ENCODE measurements at regions of chr17 and their contacts with region 1.

Region 1: DNA sequence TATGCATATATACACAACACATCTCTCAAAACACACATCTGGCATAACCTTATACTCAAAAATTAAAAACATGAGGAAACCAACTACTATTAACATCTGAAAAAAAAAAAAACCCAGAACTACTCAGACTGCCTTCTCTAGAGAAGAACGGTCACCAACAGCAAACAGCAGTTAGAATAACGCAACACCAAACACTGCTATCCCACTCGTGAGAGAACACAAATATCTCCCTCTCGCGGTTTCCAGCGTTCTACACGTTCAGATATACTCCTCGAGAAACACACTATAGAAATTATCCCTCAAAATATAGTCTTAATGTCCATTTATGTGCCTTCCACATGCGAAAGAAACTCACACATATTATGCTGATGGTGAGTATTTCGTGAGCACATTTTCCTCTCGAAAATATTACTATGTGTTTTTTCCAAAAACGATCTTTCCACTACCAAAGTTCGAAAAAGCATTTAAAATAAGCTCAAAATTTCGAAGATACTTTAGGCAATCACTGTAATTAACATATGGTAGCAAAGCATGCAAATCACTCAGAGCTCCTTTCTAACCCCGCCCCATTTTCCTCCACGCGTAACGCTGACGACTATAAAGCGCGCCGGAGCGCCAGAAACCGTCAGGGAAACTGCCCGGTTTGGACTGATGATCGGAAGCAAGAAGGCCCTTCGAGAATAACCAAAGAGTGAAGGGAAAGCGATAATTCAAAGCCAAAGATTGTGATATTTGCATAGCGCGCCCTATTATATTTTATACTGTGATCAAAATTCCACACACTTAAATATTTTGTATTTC is 60.1 kb downstream of the TEX14 start:
- DNase-seq: peak; percentile 100
- ATAC-seq: peak; percentile 90
- H3K4me3 ChIP-seq: peak overlapping the region; percentile 39 to 48
- H3K27ac ChIP-seq: peak overlapping the region; percentile 80
- H3K4me1 ChIP-seq: peaks cover 11 to 18% of the 10 kb centered on the region in 2 experiments
- H3K27me3 ChIP-seq: no peaks in the 10 kb centered on the region
- CTCF ChIP-seq: peak in 2 of 3 experiments; percentile 7 to 16; a peak in 1 of 6 replicates
- POLR2A ChIP-seq: peak; percentile 100
- RAD21 ChIP-seq: peak; percentile 50

Region 2: GRCh38 chr17:58317421-58318064 is 314.2 kb before region 1 on chr17:
- CTCF ChIA-PET with region 1: no interaction called
- POLR2A ChIA-PET with region 1: interaction called, 18 read pairs
- RAD21 ChIA-PET with region 1: no interaction called
- intact Hi-C with region 1: no loop called
- DNase-seq: peak; percentile 72
- ATAC-seq: peak; percentile 95
- H3K4me3 ChIP-seq: no peak overlapping the region
- H3K27ac ChIP-seq: peak overlapping the region; percentile 30; the same call in 1 of the 2 replicates
- H3K4me1 ChIP-seq: peaks cover 8 to 17% of the 10 kb centered on the region in 2 experiments; a peak in 3 of 4 replicates
- H3K27me3 ChIP-seq: no peaks in the 10 kb centered on the region
- CTCF ChIP-seq: peak; percentile 97 to 99 (median 99)
- POLR2A ChIP-seq: no peak
- RAD21 ChIP-seq: peak; percentile 100

Region 3: DNA sequence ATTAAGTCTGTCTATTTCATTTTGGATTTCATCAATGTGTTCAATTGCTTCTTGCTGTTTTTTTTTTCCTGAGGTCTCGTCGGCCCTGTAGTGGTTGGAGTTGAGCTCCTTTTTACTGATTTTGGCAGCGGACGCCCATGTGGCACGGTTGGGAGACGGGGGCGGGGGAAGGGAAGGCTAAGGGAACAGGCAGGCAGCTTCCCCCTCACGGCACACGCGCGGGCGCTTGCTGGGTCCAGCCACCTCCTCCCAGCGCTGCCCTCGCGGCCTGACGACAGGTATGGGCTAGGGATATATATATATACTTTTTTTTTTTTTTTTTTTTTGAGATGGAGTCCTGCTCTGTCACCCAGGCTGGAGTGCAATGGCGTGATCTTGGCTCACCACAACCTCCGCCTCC is 154.9 kb before region 1 on chr17:
- CTCF ChIA-PET with region 1: no interaction called
- POLR2A ChIA-PET with region 1: no interaction called
- RAD21 ChIA-PET with region 1: no interaction called
- intact Hi-C with region 1: no loop called
- DNase-seq: no peak
- ATAC-seq: no peak
- H3K4me3 ChIP-seq: no peak overlapping the region
- H3K27ac ChIP-seq: no peak overlapping the region
- H3K4me1 ChIP-seq: no peaks in the 10 kb centered on the region
- H3K27me3 ChIP-seq: 0 out of 2 replicates have a peak, but pooled peaks cover 3% of the 10 kb centered on the region
- CTCF ChIP-seq: no peak
- POLR2A ChIP-seq: no peak
- RAD21 ChIP-seq: no peak

Region 4: DNA sequence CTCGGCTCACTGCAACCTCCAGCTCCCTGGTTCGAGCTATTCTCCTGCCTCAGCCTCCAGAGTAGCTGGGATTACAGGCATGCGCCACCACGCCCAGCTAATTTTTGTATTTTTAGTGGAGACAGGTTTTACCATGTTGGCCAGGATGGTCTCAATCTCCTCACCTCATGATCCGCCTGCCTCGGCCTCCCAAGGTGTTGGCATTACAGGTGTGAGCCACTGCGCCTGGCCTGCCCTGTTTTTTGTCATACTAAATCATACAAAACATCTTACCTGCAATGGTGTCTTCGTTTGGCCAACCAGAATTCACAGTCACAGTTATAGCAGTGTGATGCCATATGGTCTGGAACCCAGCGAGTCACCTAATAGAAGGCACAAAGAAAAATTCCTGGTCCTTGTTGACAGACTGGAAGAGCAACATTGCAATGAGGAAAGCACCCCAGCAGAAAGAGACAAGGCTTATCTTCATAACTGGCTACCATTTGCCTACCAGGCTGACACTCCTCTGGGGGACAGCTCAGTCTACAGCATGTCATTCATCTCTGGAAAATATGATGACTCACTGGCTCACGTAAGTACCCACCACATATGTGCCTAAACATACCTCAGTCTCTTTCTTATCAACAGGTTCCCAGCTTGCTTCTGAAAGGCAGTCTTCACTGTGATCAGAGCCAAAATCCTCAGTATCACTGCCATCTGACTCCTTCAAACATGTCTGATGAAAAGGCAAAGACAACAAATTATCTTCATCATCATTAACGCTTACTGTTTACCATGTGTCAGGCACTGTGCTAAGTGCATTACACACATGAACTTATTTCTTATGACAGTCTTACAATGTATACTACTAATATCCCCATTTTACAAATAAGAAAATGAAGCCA is 139.2 kb before region 1 on chr17:
- CTCF ChIA-PET with region 1: no interaction called
- POLR2A ChIA-PET with region 1: no interaction called
- RAD21 ChIA-PET with region 1: no interaction called
- intact Hi-C with region 1: no loop called
- DNase-seq: no peak
- ATAC-seq: 0 out of 2 replicates have a peak, but pooled peaks have one; percentile 38
- H3K4me3 ChIP-seq: no peak overlapping the region
- H3K27ac ChIP-seq: no peak overlapping the region
- H3K4me1 ChIP-seq: no peaks in the 10 kb centered on the region
- H3K27me3 ChIP-seq: no peaks in the 10 kb centered on the region
- CTCF ChIP-seq: no peak
- POLR2A ChIP-seq: no peak
- RAD21 ChIP-seq: no peak

Region 5: GRCh38 chr17:58541249-58541648 is 90.5 kb before region 1 on chr17:
- CTCF ChIA-PET with region 1: interaction called, 4 read pairs
- POLR2A ChIA-PET with region 1: interaction called, 33 read pairs
- RAD21 ChIA-PET with region 1: interaction called, 3 to 4 read pairs
- intact Hi-C with region 1: no loop called
- DNase-seq: peak; percentile 54
- ATAC-seq: peak; percentile 93
- H3K4me3 ChIP-seq: no peak overlapping the region
- H3K27ac ChIP-seq: no peak overlapping the region
- H3K4me1 ChIP-seq: peaks cover 0 to 18% of the 10 kb centered on the region in 2 experiments; a peak in 2 of 4 replicates
- H3K27me3 ChIP-seq: no peaks in the 10 kb centered on the region
- CTCF ChIP-seq: peak; percentile 37 to 80 (median 74); a peak in 5 of 6 replicates
- POLR2A ChIP-seq: no peak
- RAD21 ChIP-seq: peak; percentile 64; the same call in 1 of the 2 replicates

Region 6: DNA sequence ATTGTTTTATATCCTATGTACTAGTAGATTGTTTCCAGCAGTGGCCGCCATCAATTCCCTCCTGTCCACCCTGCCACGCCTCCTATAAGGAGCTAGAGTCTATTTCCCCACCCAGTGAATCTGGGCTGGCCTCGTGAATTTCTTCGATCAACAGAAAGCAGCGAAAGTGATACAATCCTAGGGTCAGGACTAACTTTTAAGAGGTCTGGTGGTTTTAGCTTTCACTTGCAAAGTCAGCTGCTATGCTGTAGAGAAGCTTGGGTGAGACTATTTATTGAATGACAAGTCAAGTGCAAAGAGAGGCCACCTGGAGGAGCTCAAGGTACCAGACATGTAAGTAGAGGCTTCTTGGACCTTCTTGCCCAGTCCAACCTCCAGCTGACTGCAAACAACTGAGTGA is 36.4 kb before region 1 on chr17:
- CTCF ChIA-PET with region 1: interaction called, 9 read pairs
- POLR2A ChIA-PET with region 1: interaction called, 56 read pairs
- RAD21 ChIA-PET with region 1: interaction called in 1 of 2 experiments, 3 read pairs
- intact Hi-C with region 1: loop called (anchors 2 kb)
- DNase-seq: peak; percentile 36
- ATAC-seq: peak; percentile 90
- H3K4me3 ChIP-seq: no peak overlapping the region
- H3K27ac ChIP-seq: no peak overlapping the region
- H3K4me1 ChIP-seq: 0 out of 4 replicates have a peak, but pooled peaks cover 0 to 3% of the 10 kb centered on the region in 2 experiments
- H3K27me3 ChIP-seq: no peaks in the 10 kb centered on the region
- CTCF ChIP-seq: peak in 2 of 3 experiments; percentile 17 to 44; a peak in 4 of 6 replicates
- POLR2A ChIP-seq: no peak
- RAD21 ChIP-seq: peak; percentile 50

Region 7: DNA sequence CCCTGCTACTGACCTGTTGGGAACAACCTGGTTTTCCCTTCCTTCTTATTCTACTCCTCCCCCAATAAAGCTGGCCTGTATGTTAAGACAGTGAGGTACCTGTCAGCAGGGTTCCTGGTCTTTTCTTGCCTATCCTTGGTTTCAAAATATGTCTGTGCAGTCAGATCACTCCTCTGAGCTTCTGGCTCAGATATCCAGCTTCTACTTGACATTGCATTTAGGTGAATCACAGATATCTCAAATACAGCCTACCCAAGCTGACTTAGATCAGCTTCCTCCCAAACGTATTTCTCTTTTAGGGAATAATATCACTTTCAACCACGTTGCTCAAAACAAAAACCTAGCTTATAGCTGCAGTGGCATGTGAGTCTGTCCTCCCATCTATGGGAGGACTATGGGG is 11.4 kb after region 1 on chr17:
- CTCF ChIA-PET with region 1: interaction called, 3 read pairs
- POLR2A ChIA-PET with region 1: interaction called, 238 read pairs
- RAD21 ChIA-PET with region 1: no interaction called
- intact Hi-C with region 1: no loop called
- DNase-seq: no peak
- ATAC-seq: no peak
- H3K4me3 ChIP-seq: no peak overlapping the region
- H3K27ac ChIP-seq: no peak overlapping the region
- H3K4me1 ChIP-seq: peaks cover 0 to 19% of the 10 kb centered on the region in 2 experiments; a peak in 2 of 4 replicates
- H3K27me3 ChIP-seq: no peaks in the 10 kb centered on the region
- CTCF ChIP-seq: no peak
- POLR2A ChIP-seq: no peak
- RAD21 ChIP-seq: no peak

Region 8: DNA sequence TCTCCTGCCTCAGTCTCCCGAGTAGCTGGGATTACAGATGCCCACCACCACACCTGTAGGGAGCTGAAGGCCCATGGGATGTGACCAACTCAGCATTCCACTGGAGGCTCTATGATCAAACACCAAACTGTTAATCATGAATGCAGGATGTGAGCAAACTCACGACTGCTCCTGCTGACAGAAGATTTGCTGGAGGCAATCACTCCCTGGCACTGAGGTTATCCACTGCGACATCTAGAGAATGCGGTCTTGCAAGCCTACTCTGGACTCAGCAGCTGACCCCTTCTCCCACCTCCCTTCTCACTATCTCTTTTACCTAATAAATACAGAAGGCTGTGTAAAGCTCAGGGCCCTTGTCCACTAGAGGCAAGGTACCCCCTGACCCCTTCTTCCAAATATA is 55.3 kb after region 1 on chr17:
- CTCF ChIA-PET with region 1: no interaction called
- POLR2A ChIA-PET with region 1: interaction called, 49 read pairs
- RAD21 ChIA-PET with region 1: no interaction called
- intact Hi-C with region 1: no loop called
- DNase-seq: no peak
- ATAC-seq: no peak
- H3K4me3 ChIP-seq: no peak overlapping the region
- H3K27ac ChIP-seq: no peak overlapping the region
- H3K4me1 ChIP-seq: peaks cover under 1 to 4% of the 10 kb centered on the region in 2 experiments; a peak in 3 of 4 replicates
- H3K27me3 ChIP-seq: no peaks in the 10 kb centered on the region
- CTCF ChIP-seq: no peak
- POLR2A ChIP-seq: no peak
- RAD21 ChIP-seq: no peak

Region 9: GRCh38 chr17:58808645-58809563 is 177.2 kb after region 1 on chr17:
- CTCF ChIA-PET with region 1: no interaction called
- POLR2A ChIA-PET with region 1: no interaction called
- RAD21 ChIA-PET with region 1: no interaction called
- intact Hi-C with region 1: no loop called
- DNase-seq: no peak
- ATAC-seq: no peak
- H3K4me3 ChIP-seq: no peak overlapping the region
- H3K27ac ChIP-seq: no peak overlapping the region
- H3K4me1 ChIP-seq: no peaks in the 10 kb centered on the region
- H3K27me3 ChIP-seq: no peaks in the 10 kb centered on the region
- CTCF ChIP-seq: no peak
- POLR2A ChIP-seq: no peak
- RAD21 ChIP-seq: no peak

Measured in HCT116 (cell line).